B cell (primary cell): ENCODE measurements at regions of chr1 and their contacts with region 1.

Region 1: DNA sequence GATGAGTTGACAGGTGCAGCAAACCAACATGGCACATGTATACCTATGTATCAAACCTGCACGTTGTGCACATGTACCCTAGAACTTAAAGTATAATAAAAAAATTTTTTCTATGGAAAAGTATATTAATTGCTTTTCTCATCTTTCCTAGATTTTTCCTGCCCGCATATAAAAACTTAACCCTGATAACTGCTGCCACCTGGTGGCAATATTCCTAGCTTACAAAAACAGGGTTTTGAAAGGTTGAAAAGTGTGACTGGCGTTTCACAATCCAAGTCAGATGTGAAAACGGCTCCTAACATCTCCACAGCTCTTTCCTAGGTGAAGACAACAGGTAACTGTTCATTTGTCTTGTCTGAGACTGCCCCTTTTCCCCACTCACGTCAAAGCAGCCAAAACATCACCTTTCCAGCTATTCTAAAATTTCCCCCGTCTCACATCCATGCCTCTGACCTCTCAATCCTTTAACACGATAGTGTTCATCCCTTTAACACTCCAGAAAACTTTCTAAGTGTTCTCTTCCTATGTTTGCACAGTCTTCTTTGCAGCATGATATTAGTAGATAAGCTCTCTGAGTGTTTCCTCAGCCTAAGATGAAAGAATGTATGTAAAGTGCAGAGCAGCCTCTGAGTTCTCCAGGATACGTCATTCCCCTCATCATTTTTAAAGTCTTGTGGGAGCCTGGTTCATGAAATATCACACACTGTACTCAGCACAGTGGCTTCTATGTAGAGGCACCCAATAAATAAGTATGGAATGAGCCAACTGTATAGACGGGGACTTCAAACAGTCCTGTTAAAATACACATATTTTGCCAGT is 27.5 kb downstream of the OVGP1 start:
- DNase-seq: peak; percentile 61
- ATAC-seq: no peak
- H3K4me3 ChIP-seq: no peak overlapping the region
- H3K4me3 Mint-ChIP-seq: no peak overlapping the region
- H3K27ac ChIP-seq: no peak overlapping the region
- H3K27ac Mint-ChIP-seq: peak overlapping the region; percentile 8
- H3K4me1 ChIP-seq: peaks cover 12 to 15% of the 10 kb centered on the region in 2 donors
- H3K4me1 Mint-ChIP-seq: peaks cover 24% of the 10 kb centered on the region
- H3K27me3 ChIP-seq: no peaks in the 10 kb centered on the region
- H3K27me3 Mint-ChIP-seq: no peaks in the 10 kb centered on the region
- CTCF ChIP-seq: peak; percentile 70

Region 2: DNA sequence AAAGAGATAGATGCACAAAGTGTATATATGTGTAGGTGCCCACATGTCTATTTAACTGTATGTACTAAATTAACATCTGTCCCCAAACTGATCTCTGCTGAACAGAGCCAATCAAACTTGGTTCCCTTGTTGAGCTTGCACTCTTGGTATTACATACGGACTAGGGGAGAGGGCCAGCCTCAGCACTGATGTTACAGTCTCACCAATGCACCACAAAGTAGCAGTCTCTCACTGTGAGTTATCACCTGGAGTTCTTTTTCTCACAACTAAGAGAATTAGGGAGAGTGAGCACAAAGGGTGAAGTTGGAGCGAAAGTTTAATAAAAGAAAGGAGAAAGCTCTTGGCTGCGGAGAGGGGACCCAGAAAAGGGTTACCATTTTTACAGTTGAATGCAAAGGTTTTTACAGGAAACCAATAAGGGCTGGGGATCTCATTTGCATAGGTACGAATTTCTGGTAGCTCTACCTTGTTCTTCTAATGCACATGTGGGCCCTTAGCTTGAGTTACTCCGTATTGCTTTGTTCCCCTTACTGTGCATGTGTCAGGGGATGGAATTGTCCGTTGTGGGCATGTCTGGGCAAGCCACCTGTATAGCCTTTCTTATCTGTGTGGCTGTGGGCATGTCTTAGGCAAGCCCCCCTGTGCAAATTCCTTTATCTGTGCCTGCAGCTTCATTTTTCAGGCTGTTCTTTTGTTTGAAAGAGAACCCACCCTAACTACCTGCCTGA is 185.8 kb before region 1 on chr1:
- CTCF ChIA-PET with region 1: interaction called, 55 read pairs
- POLR2A ChIA-PET with region 1: no interaction called
- intact Hi-C with region 1: no loop called
- DNase-seq: peak; percentile 61
- ATAC-seq: no peak
- H3K4me3 ChIP-seq: peak overlapping the region in 1 of 5 experiments; percentile 42
- H3K4me3 Mint-ChIP-seq: peak overlapping the region; percentile 59
- H3K27ac ChIP-seq: peak overlapping the region; percentile 81 to 92
- H3K27ac Mint-ChIP-seq: peak overlapping the region; percentile 95
- H3K4me1 ChIP-seq: peaks cover 67 to 75% of the 10 kb centered on the region in 2 donors
- H3K4me1 Mint-ChIP-seq: peaks cover 78% of the 10 kb centered on the region
- H3K27me3 ChIP-seq: no peaks in the 10 kb centered on the region
- H3K27me3 Mint-ChIP-seq: no peaks in the 10 kb centered on the region
- CTCF ChIP-seq: no peak

Region 3: GRCh38 chr1:111417755-111418154 is 17.8 kb after region 1 on chr1:
- CTCF ChIA-PET with region 1: interaction called, 11 read pairs
- POLR2A ChIA-PET with region 1: no interaction called
- intact Hi-C with region 1: no loop called
- DNase-seq: no peak
- ATAC-seq: no peak
- H3K4me3 ChIP-seq: no peak overlapping the region
- H3K4me3 Mint-ChIP-seq: no peak overlapping the region
- H3K27ac ChIP-seq: no peak overlapping the region
- H3K27ac Mint-ChIP-seq: no peak overlapping the region
- H3K4me1 ChIP-seq: peaks cover 0 to 6% of the 10 kb centered on the region in 2 donors
- H3K4me1 Mint-ChIP-seq: peaks cover 4% of the 10 kb centered on the region
- H3K27me3 ChIP-seq: no peaks in the 10 kb centered on the region
- H3K27me3 Mint-ChIP-seq: no peaks in the 10 kb centered on the region
- CTCF ChIP-seq: no peak

Region 4: DNA sequence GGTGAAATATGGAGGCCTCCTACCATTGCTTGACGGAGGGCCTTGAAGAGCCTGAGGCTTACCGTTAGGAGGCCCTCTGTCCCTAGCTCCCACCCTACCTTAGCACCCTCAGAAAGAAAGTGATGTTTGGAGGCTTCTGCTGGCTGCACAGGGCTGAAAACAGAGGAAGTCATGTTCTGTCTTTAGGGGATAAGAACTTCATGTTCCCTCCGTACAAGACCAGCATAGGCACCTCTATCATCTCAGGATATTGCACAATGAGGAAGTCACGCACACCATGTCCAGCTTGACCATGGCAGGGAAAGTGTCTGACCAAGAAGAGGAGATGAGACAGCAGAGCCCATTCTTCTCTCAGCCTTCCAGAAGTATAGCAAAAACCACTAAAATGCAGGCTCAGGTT is 89.6 kb after region 1 on chr1:
- CTCF ChIA-PET with region 1: no interaction called
- POLR2A ChIA-PET with region 1: no interaction called
- intact Hi-C with region 1: no loop called
- DNase-seq: no peak
- ATAC-seq: peak; percentile 81
- H3K4me3 ChIP-seq: no peak overlapping the region
- H3K4me3 Mint-ChIP-seq: no peak overlapping the region
- H3K27ac ChIP-seq: no peak overlapping the region
- H3K27ac Mint-ChIP-seq: peak overlapping the region; percentile 80
- H3K4me1 ChIP-seq: no peaks in the 10 kb centered on the region
- H3K4me1 Mint-ChIP-seq: peaks cover 9% of the 10 kb centered on the region
- H3K27me3 ChIP-seq: no peaks in the 10 kb centered on the region
- H3K27me3 Mint-ChIP-seq: no peaks in the 10 kb centered on the region
- CTCF ChIP-seq: peak; percentile 36

Region 5: GRCh38 chr1:112165375-112165774 is 765.4 kb after region 1 on chr1:
- CTCF ChIA-PET with region 1: no interaction called
- POLR2A ChIA-PET with region 1: no interaction called
- intact Hi-C with region 1: no loop called
- DNase-seq: no peak
- ATAC-seq: no peak
- H3K4me3 ChIP-seq: no peak overlapping the region
- H3K4me3 Mint-ChIP-seq: no peak overlapping the region
- H3K27ac ChIP-seq: no peak overlapping the region
- H3K27ac Mint-ChIP-seq: no peak overlapping the region
- H3K4me1 ChIP-seq: no peaks in the 10 kb centered on the region
- H3K4me1 Mint-ChIP-seq: no peaks in the 10 kb centered on the region
- H3K27me3 ChIP-seq: peaks cover 0 to 5% (median 2%) of the 10 kb centered on the region in 4 experiments
- H3K27me3 Mint-ChIP-seq: peaks cover 30% of the 10 kb centered on the region
- CTCF ChIP-seq: no peak